MCF 10A (cell line): ENCODE measurements at regions of chr6 and their contacts with region 1.

Region 1: DNA sequence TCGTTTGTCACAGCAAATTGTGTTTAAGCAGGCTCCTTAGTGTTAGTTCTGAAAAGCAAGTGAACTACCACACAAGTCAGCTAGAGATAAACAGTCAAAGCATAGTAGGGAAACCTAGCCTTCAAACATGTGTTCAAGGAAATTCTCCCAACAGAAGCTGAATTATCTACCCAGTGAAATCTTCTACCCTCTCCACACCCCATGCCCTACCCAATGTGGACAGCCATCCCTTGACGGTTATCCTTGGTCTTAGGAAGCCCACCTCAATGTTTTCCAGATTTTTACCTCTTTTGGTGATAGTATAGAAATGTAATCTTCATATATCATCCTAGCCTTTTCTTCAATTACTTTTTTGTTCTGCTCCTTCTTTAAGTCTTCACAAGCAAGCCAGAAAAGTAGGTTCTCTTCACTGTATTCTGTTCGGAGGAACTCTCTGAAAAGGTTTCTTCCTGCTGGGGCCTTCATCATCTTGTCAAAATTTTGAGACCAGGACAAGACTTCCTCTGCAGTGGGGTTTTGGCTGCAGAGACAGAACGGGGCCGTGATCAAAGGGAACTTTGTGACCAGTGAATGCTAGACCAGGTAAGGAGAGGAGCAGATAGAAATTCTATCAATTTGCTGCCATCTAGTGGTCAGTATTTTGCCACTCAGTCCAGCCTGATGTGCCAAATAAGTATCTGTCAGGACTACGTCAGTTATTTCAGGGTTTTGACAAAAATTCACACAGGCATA is 21.6 kb upstream of the MTRF1L start:
- DNase-seq: peak; percentile 70
- H3K4me3 Mint-ChIP-seq: no peak overlapping the region
- H3K27ac Mint-ChIP-seq: no peak overlapping the region
- H3K4me1 Mint-ChIP-seq: peaks cover 6% of the 10 kb centered on the region
- H3K27me3 Mint-ChIP-seq: no peaks in the 10 kb centered on the region
- CTCF ChIP-seq: peak; percentile 70

Region 2: GRCh38 chr6:152954443-152954842 is 69.7 kb before region 1 on chr6:
- CTCF ChIA-PET with region 1: interaction called, 55 read pairs
- POLR2A ChIA-PET with region 1: interaction called, 3 read pairs
- intact Hi-C with region 1: loop called (anchors 1 kb)
- DNase-seq: no peak
- H3K4me3 Mint-ChIP-seq: no peak overlapping the region
- H3K27ac Mint-ChIP-seq: no peak overlapping the region
- H3K4me1 Mint-ChIP-seq: peaks cover 7% of the 10 kb centered on the region
- H3K27me3 Mint-ChIP-seq: peaks cover 15% of the 10 kb centered on the region
- CTCF ChIP-seq: no peak

Region 3: DNA sequence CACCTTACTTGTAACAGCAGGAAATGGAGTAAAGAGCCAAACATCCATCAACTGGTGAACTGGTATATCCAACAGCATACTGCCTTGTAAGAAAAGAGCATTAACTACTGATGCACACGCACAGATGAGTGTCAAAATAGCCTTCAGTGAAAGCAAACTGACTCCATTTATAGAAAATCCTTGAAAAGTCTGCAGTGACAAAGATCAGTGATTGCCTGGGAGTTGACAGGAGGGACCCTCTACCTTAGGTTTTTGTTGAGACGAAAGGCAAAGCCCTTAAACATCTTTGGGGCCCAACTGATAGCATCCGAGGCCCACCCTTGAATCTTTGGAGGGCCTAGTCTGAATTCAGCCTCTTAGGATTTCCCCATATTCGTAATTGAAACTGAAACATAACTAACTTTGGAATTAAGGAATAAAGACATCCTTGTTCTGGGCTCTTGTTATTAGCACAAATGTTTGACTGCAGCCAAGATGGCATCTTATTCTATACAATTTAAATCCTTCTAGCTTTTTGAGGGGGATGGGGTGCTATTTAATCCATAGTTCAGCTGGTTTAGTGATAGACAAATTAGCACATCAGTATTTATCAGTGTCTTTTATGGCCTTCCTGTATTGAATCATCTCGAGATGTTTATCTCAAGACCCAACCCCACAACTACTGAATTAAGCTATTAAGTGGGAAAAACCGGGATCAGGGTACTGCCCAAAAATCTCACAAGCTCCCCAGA is 54.3 kb before region 1 on chr6:
- CTCF ChIA-PET with region 1: no interaction called
- POLR2A ChIA-PET with region 1: no interaction called
- intact Hi-C with region 1: no loop called
- DNase-seq: no peak
- H3K4me3 Mint-ChIP-seq: no peak overlapping the region
- H3K27ac Mint-ChIP-seq: no peak overlapping the region
- H3K4me1 Mint-ChIP-seq: peaks cover under 1% of the 10 kb centered on the region
- H3K27me3 Mint-ChIP-seq: peaks cover 4% of the 10 kb centered on the region
- CTCF ChIP-seq: no peak